Naive thymus-derived CD8-positive, alpha-beta T cell (primary cell): ENCODE measurements at regions of chr15 and their contacts with region 1.

Region 1: DNA sequence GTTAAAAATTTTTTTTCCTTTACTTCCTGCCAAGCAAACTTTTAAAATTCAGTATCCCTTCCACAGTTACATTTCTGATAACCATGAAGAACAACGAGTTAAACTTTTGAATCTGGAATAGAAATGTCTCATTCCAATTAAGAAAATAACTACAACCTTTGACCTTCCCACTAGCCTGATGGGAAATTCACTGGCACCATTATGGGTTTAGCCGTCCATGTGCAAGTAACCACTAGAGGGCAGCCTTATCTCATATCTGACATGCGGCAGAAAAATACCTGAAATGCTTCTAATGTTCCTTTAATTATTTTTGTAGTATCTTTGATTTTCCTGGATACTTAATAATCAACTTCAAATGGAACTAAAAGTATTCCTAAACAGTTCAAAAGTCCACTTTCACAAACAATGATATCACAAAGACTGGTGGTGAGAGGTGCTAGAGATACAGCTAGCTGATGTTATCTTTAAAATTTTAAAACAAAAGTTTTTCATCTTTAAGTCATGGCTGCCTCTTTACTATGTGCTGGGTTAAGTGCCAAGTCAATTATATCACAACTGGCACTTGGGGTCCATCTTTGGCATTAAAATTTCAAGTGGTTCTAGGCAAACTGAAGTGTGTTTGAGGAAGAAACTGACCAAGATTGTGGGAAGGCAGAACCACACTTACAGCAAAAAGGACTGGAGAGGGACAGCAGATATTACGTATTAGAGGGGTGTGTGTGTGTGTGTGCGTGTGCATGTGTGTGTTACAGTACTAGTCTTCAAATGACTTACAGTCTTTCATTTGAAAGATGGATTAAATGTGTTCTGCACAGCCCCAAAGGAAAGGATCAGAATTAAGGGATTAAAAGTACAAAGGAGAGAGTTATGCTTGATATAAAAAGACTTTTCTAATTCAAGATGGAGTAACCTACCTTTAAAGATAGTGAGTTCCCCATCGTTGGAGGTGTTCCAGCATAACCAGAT is 107.1 kb upstream of the ICE2 start:
- DNase-seq: peak; percentile 13 to 86 (median 64)
- ATAC-seq: peak in 1 of 2 donors; percentile 44
- H3K4me3 Mint-ChIP-seq: peak overlapping the region; percentile 46 to 89 (median 80)
- H3K27ac Mint-ChIP-seq: peak overlapping the region; percentile 51 to 98 (median 94)
- H3K4me1 Mint-ChIP-seq: peaks cover 40 to 90% (median 87%) of the 10 kb centered on the region in 4 donors
- H3K27me3 Mint-ChIP-seq: peaks cover 0 to 6% (median 0%) of the 10 kb centered on the region in 5 donors

Region 2: GRCh38 chr15:60568301-60568742 is 17.7 kb before region 1 on chr15:
- POLR2A ChIA-PET with region 1: interaction called, 82 read pairs
- DNase-seq: no peak
- ATAC-seq: peak in 1 of 2 donors; percentile 7
- H3K4me3 Mint-ChIP-seq: peak overlapping the region; percentile 12 to 78 (median 66)
- H3K27ac Mint-ChIP-seq: peak overlapping the region; percentile 72 to 95 (median 88)
- H3K4me1 Mint-ChIP-seq: peaks cover 50 to 97% (median 93%) of the 10 kb centered on the region in 4 donors
- H3K27me3 Mint-ChIP-seq: no peaks in the 10 kb centered on the region

Region 3: DNA sequence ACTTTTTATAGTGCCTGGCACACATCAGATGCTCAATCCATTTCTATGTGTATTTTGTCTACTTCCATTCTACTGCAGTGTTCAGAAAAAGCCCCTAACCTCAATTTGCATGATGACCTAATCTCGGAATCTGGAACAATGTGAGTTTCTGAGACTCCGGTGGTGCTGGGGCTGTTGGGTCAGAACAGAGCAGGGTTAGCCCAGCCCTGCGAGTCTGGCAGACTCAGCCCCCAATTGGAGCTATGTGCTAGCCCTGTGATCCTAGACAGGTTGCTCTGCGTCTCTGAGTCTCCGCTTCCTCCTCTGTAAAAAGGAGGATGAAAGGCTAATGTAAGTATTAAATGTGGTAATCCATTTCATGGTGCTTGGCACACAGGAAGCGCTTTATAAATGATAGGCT is 12.1 kb before region 1 on chr15:
- POLR2A ChIA-PET with region 1: interaction called, 77 read pairs
- DNase-seq: peak in 7 of 10 donors; percentile 25 to 55 (median 45)
- ATAC-seq: peak; percentile 82 to 87
- H3K4me3 Mint-ChIP-seq: peak overlapping the region; percentile 46 to 93 (median 72)
- H3K27ac Mint-ChIP-seq: peak overlapping the region; percentile 86 to 96 (median 92)
- H3K4me1 Mint-ChIP-seq: peaks cover 48 to 95% (median 92%) of the 10 kb centered on the region in 4 donors
- H3K27me3 Mint-ChIP-seq: no peaks in the 10 kb centered on the region